GM13976 (cell line): ENCODE measurements at regions of chr18 and their contacts with region 1.

Region 1: GRCh38 chr18:2547477-2548087 is 23.7 kb downstream of the METTL4 start:
- DNase-seq: peak; percentile 42
- CTCF ChIP-seq: peak; percentile 22

Region 2: DNA sequence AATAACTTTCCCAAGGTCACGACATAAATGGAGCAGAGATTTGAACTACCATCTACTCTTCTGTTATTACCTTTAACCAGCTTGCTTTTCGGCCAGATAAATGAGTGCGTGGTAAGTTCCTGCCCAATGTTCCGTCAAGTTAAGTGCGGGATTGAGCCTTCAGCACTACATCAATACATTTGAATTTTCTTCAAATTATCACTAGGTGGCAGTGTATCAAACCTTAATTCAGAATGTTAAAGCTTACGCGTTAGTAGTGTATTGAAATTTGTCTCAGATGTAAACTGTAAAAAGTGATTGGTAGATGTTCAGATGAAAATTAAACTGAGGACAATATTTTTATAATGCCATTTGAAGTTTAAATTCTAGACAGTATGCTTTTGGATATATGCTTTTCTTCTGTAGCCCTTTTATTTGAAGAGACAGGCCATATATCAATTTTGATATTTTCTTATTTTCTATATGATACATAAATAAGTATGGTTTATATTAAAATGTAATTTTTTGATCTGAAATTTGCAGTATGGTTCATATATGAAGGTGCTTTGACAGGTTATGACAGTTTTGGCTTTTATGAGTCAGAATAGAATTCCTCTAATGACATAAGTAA is 961.6 kb before region 1 on chr18:
- in situ Hi-C with region 1: loop called (anchors 25 kb)
- DNase-seq: peak; percentile 14
- CTCF ChIP-seq: peak; percentile 27

Region 3: GRCh38 chr18:2104620-2105462 is 442.7 kb before region 1 on chr18:
- in situ Hi-C with region 1: loop called (anchors 25 kb)
- DNase-seq: peak; percentile 53
- CTCF ChIP-seq: peak; percentile 80

Region 4: DNA sequence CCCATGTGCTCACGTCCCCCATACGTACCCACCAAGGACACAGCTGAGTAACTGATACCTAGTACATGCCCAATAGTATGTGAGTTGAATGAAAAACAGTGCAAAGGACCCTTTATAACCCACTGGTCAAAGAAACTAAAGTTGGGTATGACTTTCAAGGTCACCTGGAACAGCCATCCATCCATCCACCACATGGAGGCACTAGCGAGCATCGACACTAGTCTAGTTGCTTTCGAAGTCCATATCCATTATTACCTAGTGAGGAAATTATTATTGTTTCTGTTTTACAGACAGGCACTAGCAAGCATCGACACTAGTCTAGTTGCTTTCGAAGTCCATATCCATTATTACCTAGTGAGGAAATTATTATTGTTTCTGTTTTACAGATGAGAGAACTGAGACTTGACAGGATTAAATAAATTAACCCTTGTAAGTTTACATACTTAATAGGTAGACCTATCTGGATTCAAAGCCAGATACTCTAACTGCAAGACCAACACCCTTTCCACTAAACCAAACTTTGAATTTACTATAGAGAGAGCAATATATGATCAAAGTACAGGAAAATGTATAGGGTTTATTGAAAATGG is 209.9 kb before region 1 on chr18:
- in situ Hi-C with region 1: loop called (anchors 25 kb)
- DNase-seq: peak; percentile 37
- CTCF ChIP-seq: peak; percentile 39